ENCODE measurements at regions of chr20 and their contacts with region 1.

Region 1: GRCh38 chr20:21702553-21703470 is 2.7 kb upstream of the PAX1 start:
- DNase-seq: peak in 1 of 2 experiments; percentile 98
- H3K4me3 ChIP-seq: peak overlapping the region; percentile 1 to 52 (median 26); a peak in 7 of 8 replicates
- H3K27ac ChIP-seq: no peak overlapping the region
- H3K4me1 ChIP-seq: peaks cover 5 to 31% (median 18%) of the 10 kb centered on the region in 4 experiments
- H3K27me3 ChIP-seq: peaks cover 95 to 100% (median 99%) of the 10 kb centered on the region in 4 experiments
- CTCF ChIP-seq: peak; percentile 68 to 81 (median 77)
- EP300 ChIP-seq: no peak
- POLR2A ChIP-seq: no peak
- RAD21 ChIP-seq: peak; percentile 69 to 74

Region 2: DNA sequence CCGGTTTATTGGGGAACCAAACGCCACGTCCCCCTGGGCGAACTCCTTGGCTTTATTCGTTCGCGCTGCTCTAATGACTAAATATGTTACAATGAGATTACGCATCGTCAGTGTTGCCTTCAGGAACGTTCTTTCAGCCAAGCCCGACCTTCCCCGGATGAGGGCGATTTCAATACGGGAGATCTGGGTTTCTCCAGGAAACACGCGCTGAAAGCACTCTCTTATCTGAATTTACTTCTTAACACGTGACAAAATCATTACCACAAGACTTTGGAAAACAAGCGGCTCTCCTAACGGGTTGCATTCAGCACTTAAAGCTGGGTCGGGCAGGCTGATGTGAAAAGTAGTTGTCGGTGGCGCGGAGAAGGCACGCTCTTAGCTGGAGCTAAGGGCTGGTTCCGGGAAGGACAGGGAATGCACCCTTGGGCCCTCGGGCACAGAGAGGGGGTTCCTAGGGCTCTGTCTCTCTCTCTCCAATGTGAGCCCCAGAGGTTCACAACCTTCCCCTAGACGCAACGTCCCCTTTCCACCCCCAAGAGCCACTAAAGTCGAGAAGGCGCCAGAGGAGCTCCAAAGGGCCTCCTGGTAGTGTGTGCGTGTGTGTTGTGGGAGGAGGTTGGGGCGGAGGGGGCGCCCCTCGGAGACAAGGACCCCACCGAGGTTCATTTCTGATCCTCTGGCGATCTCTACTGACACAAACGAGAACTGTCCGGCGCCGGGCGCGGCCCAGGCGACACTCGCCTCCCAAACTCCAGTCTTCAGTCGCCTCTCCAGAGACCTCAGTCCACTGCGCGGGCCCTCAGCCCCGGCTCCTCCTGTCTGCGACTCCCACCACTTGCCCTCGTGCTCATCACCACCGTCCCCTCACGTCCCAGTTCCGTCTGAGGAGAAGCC is 181.9 kb before region 1 on chr20:
- CTCF ChIA-PET with region 1: interaction called, 13 read pairs
- POLR2A ChIA-PET with region 1: interaction called, 3 read pairs
- DNase-seq: no peak
- H3K4me3 ChIP-seq: peak overlapping the region; percentile 32 to 59 (median 34); a peak in 7 of 8 replicates
- H3K27ac ChIP-seq: no peak overlapping the region
- H3K4me1 ChIP-seq: peaks cover 19 to 53% (median 31%) of the 10 kb centered on the region in 4 experiments
- H3K27me3 ChIP-seq: peaks cover 94 to 100% (median 100%) of the 10 kb centered on the region in 4 experiments
- CTCF ChIP-seq: peak; percentile 59 to 75 (median 72)
- EP300 ChIP-seq: no peak
- POLR2A ChIP-seq: no peak
- RAD21 ChIP-seq: peak; percentile 77 to 85

Region 3: GRCh38 chr20:21583486-21584168 is 119.2 kb before region 1 on chr20:
- CTCF ChIA-PET with region 1: no interaction called
- POLR2A ChIA-PET with region 1: no interaction called
- DNase-seq: no peak
- H3K4me3 ChIP-seq: no peak overlapping the region
- H3K27ac ChIP-seq: no peak overlapping the region
- H3K4me1 ChIP-seq: no peaks in the 10 kb centered on the region
- H3K27me3 ChIP-seq: peaks cover 0 to 1% (median 0%) of the 10 kb centered on the region in 4 experiments; a peak in 1 of 7 replicates
- CTCF ChIP-seq: no peak
- EP300 ChIP-seq: no peak
- POLR2A ChIP-seq: no peak
- RAD21 ChIP-seq: no peak

Region 4: DNA sequence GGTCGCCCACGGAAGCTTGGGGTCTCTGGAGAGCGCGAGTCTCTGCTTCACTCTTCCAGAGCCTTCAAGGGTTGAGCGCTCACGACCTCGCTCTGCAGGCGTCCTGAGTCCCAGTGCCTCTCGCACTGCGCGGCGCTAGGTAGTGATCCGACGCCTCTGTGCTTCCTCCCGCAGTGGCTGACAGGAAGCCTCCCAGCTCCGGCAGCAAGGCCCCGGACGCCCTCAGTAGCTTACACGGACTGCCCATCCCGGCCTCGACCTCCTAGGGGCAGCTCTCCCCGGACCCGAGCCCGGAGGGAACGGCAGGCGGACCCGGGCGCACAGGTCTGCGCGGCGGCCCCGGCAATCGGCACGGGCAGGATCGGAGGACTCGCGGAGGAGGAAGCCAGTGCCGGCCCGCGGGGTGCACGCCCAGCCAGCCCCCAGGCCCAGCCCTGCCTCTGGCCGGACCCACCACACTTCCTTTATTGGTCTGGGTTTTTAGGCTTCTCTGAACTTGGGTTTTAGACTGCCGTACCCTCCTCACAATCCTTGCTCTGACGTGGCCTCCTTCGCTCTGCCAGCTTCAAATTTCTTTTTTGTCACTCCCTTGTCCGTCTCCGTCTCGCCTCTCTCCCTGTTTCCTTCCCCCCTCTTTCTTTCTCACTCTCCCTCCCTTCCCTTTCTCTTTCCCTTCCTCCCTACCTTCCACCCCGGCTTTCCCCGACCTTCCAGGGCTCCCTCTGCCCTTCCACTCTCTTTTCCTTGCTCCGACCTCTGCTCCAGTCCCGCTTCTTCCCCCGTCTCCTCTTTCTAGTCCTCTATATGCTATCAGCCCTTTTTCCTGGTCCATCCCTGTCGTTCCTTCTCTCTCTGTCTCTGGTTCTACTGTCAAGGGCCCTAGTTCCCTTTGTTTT is 11.7 kb after region 1 on chr20:
- CTCF ChIA-PET with region 1: interaction called, 58 read pairs
- POLR2A ChIA-PET with region 1: interaction called, 8 read pairs
- DNase-seq: peak in 1 of 2 experiments; percentile 85
- H3K4me3 ChIP-seq: peak overlapping the region; percentile 25 to 58 (median 34); a peak in 7 of 8 replicates
- H3K27ac ChIP-seq: no peak overlapping the region
- H3K4me1 ChIP-seq: peaks cover 3 to 13% (median 5%) of the 10 kb centered on the region in 4 experiments; a peak in 6 of 7 replicates
- H3K27me3 ChIP-seq: peaks cover 66 to 96% (median 86%) of the 10 kb centered on the region in 4 experiments
- CTCF ChIP-seq: no peak
- EP300 ChIP-seq: no peak
- POLR2A ChIP-seq: no peak
- RAD21 ChIP-seq: no peak

Region 5: GRCh38 chr20:21719592-21720214 is 16.9 kb after region 1 on chr20:
- CTCF ChIA-PET with region 1: interaction called, 58 read pairs
- POLR2A ChIA-PET with region 1: interaction called, 8 read pairs
- DNase-seq: peak in 1 of 2 experiments; percentile 81
- H3K4me3 ChIP-seq: no peak overlapping the region
- H3K27ac ChIP-seq: no peak overlapping the region
- H3K4me1 ChIP-seq: peaks cover 0 to 5% (median 2%) of the 10 kb centered on the region in 4 experiments; a peak in 3 of 7 replicates
- H3K27me3 ChIP-seq: peaks cover 23 to 44% (median 36%) of the 10 kb centered on the region in 4 experiments
- CTCF ChIP-seq: peak in 2 of 3 experiments; percentile 56 to 66; a peak in 2 of 4 replicates
- EP300 ChIP-seq: no peak
- POLR2A ChIP-seq: no peak
- RAD21 ChIP-seq: peak; percentile 51 to 55